OCI-LY7 (cell line): ENCODE measurements at regions of chr1 and their contacts with region 1.

Region 1: DNA sequence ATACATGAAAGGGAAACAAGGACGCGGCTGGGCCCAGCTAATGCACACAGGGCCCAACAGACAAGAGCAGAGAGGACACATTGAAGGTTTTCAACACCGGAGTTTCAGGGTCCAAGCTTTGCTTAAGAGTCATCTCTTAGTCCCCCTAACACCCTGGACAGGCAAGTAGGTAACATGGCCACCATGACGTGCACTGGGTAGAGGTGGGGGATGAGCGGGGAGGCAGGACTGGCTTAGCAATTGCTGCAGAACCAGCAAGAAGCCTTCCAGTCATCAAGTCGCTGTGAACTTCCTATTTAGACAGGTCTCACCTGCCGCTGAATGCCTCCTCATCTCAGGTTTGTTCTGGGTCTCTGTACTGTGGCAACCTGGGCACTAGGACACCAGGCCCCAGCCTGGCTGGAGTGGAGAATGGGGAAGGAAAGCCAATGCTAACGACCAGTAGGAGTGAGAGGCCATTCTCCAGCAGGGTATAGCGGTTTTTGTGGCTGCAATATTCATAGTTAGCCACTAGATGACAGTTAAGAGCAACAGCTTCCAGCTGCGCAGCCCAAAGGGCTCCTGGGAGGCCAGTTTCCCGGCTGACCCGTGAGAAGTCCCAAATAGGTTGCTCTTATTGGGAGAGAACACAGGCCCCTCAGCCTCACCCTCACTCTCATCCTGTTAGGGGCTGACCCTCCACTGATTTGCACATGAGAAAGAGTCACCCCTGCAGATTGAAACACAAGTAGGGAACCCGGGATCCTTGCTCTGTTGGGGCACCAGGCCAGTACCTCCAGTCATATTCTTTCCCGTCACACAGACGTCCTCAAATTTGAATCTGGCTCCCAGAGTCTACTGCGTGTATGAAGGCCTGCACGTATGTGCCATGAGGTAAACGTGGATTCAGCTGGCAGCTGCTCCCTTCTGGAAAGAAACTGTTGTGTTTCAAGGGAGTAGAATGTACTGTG is 6.0 kb upstream of the PIGC start:
- DNase-seq: peak; percentile 56
- H3K4me3 ChIP-seq: no peak overlapping the region
- H3K27ac ChIP-seq: no peak overlapping the region
- H3K4me1 ChIP-seq: no peaks in the 10 kb centered on the region
- CTCF ChIP-seq: peak; percentile 81

Region 2: DNA sequence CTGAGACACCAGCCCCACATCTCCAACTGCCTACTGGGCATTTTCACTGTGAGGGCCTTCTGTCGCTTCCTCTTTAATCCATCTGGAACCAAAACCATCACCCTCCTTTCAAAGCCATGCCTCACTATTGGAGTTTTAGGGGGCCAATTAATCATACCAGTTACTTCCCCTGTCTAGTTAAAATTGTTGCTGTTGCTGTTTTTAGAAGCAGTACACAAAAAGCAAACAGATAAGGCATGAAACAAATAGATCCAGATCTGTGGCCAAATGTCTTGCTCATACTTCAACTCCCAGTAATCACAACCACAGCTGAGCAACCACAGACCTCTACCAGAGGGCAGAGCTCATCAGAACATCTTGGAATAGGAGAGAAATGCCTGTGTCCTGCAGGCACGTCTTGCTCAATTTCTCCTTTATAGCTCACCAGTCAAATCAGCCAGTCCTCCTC is 163.2 kb before region 1 on chr1:
- CTCF ChIA-PET with region 1: no interaction called
- POLR2A ChIA-PET with region 1: no interaction called
- intact Hi-C with region 1: no loop called
- DNase-seq: no peak
- H3K4me3 ChIP-seq: no peak overlapping the region
- H3K27ac ChIP-seq: no peak overlapping the region
- H3K4me1 ChIP-seq: no peaks in the 10 kb centered on the region
- CTCF ChIP-seq: no peak

Region 3: DNA sequence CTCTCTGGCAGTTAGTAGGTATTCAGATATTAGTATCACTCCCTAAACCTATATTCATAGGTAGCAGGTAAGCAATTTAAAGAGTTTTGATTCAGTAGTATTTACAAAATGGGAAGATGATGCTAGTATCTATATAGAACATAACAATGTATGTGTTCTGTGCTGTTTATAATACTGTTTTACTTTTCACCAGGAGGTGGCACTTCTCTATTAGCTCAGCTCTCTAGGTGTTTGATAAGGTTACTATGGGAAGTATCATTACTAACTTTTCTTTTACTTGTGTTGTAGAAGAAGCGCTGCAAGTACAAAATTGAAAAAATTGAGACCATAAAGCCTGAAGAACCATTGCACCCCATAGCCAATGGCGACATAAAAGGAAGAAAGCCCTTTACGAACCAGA is 159.7 kb after region 1 on chr1:
- CTCF ChIA-PET with region 1: no interaction called
- POLR2A ChIA-PET with region 1: no interaction called
- intact Hi-C with region 1: loop called (anchors 10 kb)
- DNase-seq: peak; percentile 12
- H3K4me3 ChIP-seq: no peak overlapping the region
- H3K27ac ChIP-seq: no peak overlapping the region
- H3K4me1 ChIP-seq: no peaks in the 10 kb centered on the region
- CTCF ChIP-seq: peak; percentile 74

Region 4: DNA sequence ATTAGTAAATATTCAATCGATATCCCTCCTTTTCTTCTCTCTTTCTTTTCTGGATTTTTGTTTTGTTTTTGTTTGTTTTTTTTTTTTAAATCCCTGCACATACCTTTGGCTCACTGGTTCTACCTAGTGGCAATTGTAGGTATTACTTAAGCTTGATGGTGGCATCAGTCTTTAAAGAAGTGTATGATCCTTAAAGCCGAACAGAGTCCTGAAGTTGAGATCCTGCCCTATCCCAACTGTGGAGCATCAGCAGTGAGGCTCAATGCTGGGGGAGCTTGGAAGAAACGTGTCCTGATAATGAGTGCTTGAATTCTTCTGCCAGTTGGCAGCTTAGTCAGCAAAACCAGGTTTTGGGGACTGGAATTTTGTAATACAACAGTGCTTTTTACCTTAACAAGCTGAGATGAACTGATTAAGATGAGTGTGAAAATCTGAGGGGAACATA is 269.9 kb after region 1 on chr1:
- CTCF ChIA-PET with region 1: no interaction called
- POLR2A ChIA-PET with region 1: no interaction called
- intact Hi-C with region 1: loop called (anchors 1 kb)
- DNase-seq: peak; percentile 53
- H3K4me3 ChIP-seq: no peak overlapping the region
- H3K27ac ChIP-seq: no peak overlapping the region
- H3K4me1 ChIP-seq: no peaks in the 10 kb centered on the region
- CTCF ChIP-seq: peak; percentile 93

Region 5: DNA sequence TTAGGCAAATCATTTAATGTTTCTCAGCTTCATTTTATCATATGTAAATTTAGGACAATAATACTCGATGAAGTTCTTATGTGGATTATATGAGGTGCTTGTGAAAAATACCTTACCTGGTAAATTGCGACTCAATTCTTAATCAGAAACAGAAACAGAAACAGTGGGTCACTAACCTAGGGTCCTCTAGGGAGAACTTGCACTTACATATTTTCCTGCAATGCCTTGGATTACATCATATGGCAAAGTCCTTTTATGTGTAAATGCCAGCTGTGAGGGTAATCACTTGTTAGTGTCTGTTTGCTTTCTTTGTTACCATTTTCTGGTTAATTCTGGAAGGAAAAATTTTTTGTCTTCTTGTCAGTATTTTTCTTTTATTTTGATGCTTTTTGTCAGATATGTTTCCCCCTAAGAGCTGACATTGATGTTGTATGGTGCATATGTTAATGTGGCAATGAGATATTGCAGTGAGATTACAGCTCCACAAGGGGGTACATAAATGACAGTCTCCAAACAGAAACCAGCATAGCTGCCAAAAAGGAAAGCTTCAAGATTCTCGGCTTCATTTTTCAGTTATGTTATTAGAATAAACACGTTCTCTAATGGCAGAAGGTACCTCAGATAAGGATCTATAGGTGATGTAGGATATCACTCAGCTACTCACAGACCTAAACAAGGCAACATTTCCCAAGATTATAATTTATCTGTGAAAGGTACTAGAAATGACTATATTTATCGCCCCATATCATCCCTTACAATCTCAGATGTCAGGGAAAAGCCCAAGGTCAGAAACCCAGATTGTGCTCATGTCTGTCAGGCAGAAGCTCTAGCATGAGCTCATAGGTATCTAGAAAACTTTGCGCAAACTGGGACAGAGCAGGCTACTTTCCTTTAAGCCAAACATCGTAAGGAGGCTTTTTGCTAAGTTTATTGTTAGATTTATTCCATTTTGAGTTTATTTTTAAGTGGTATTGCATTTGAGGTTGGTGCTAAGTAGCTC is 328.9 kb after region 1 on chr1:
- CTCF ChIA-PET with region 1: no interaction called
- POLR2A ChIA-PET with region 1: no interaction called
- intact Hi-C with region 1: no loop called
- DNase-seq: peak; percentile 31
- H3K4me3 ChIP-seq: no peak overlapping the region
- H3K27ac ChIP-seq: no peak overlapping the region
- H3K4me1 ChIP-seq: peaks cover 19% of the 10 kb centered on the region
- CTCF ChIP-seq: peak; percentile 63